Activated CD4-positive, alpha-beta T cell treated with anti-CD3 and anti-CD28 coated beads for 36 hours (primary cell): ENCODE measurements at regions of chr15 and their contacts with region 1.

Region 1: DNA sequence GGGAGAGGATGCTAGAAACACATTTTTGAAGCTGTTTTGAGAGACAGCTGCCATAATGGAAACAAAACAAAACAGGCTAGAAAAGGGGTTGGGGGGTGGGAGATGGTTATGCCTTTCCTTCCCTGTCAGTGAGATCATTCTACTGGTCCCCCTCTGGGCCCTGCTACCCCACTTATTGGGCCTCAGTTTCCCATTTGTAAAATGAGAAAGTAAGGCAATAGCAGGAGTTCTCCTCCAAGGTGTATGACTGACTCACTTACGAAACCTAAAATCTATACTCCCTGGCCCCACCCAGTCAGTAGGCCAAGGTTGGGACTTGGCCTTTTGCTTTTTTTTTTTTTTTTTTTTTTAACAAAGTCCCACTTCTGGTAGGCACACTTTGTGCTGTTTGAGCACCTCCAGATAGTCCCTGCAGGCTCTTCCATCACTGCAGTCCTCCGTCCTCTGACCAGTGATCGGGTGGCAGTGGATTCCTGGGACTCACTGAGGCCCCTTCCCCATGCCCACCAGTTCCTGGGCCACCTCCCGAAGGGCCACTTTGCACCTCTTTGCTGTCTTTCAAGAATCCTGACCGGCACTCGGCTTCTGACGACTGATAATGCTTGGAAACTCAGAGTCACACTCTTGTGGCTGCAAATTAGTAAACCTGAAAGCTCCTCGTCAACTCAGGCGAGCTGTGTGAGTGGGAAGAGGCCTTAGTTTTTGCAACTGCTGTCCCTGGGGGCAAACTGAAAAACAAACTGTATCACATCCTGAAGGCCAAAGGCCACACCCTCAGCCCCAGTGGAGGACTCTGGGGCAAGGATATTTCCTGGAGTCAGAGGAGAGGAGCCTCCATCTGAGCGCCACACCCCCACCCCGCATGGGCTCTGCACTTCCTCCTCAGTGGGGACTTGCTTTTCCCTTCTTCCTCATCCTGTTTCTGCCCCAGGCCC is 6.7 kb upstream of the PSTPIP1 start:
- DNase-seq: peak; percentile 89
- ATAC-seq: peak; percentile 90
- H3K4me3 Mint-ChIP-seq: peak overlapping the region; percentile 56
- H3K27ac Mint-ChIP-seq: peak overlapping the region; percentile 98
- H3K4me1 Mint-ChIP-seq: peaks cover 48% of the 10 kb centered on the region
- H3K27me3 Mint-ChIP-seq: no peaks in the 10 kb centered on the region

Region 2: DNA sequence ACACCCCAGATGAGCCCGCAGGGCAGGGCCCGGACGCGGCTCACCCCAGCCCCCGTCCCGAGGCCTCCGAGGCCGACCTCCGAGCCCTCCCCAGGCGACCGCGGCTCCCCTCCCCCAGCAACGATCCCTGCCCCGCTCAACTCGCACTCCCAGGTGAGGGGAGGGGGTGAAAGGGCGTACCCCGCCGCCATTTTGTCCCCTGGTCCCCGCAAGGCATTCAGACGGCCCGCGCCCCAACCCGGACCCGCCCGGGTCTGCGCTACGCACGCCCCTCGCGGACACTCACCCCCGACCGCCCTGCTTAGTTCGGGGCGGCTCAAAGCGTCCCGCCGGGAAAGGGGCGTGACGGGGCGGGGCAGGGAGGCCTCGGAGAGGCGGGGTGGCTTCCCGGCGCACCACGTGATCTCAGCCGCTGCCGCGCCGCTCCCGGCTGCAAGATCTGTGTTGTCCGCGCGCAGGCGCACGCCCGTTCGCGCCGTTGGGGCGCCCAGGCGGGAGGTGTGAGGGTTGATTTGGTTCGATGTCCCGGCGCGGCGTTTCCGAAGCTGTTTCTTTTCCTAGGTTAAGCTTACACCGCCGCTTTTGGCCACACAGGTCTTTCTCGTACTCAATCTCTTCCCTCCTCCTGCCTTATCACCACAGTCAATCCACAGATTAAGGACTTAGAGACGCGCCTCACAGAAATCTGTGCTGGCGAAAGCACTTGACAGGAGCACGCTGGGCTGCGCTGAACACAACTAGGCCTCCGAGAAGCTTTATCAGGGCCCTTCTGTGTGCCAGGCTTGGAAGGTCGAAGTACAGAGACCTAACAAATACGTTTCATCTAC is 83.0 kb before region 1 on chr15 and contains the start of gene SCAPER:
- CTCF ChIA-PET with region 1: no interaction called
- POLR2A ChIA-PET with region 1: interaction called, 3 read pairs
- intact Hi-C with region 1: loop called in 1 of 2 experiments (anchors 1 kb)
- DNase-seq: peak; percentile 96
- ATAC-seq: peak; percentile 92
- H3K4me3 Mint-ChIP-seq: peak within 1 kb of the TSS; percentile 87
- H3K27ac Mint-ChIP-seq: peak within 1 kb of the TSS; percentile 92
- H3K4me1 Mint-ChIP-seq: peaks cover 34% of the 10 kb centered on the region
- H3K27me3 Mint-ChIP-seq: no peaks in the 10 kb centered on the region
- total RNA-seq, gene SCAPER: 25.9 to 35.2 TPM

Region 3: DNA sequence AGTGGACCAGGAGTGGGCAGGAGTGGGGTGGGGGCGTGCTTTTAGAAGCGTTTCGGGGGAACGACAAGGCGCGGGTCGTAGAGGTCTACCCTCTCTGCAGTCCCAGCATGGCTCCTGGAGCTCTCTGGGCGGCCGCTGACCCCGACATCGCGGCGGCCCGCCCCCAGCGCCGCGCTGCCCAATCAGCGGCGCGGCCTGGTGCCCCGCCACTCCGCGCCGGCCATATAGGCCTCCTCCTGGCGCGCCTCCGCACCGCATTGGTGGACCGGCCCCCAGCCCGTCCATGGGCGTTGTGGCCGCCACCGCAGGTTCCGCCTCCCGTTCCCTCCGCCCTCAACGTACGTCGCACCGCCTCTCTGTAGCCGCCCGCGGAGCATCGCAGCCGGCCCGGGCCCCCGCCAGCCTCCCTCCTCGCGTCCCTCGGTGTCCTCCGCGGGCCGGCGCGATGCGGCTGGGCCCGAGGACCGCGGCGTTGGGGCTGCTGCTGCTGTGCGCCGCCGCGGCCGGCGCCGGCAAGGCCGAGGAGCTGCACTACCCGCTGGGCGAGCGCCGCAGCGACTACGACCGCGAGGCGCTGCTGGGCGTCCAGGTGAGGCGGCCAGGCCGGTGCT is 56.7 kb before region 1 on chr15 and contains the start of gene RCN2:
- CTCF ChIA-PET with region 1: interaction called, 3 read pairs
- POLR2A ChIA-PET with region 1: no interaction called
- intact Hi-C with region 1: loop called in 1 of 2 experiments (anchors 1 kb)
- DNase-seq: peak; percentile 96
- ATAC-seq: peak; percentile 99
- H3K4me3 Mint-ChIP-seq: peak within 1 kb of the TSS; percentile 81
- H3K27ac Mint-ChIP-seq: peak within 1 kb of the TSS; percentile 85
- H3K4me1 Mint-ChIP-seq: peaks cover 31% of the 10 kb centered on the region
- H3K27me3 Mint-ChIP-seq: no peaks in the 10 kb centered on the region
- total RNA-seq, gene RCN2: 16.6 to 18.9 TPM

Region 4: GRCh38 chr15:77002954-77003912 is 15.0 kb after region 1 on chr15:
- CTCF ChIA-PET with region 1: interaction called, 3 read pairs
- POLR2A ChIA-PET with region 1: interaction called, 11 read pairs
- intact Hi-C with region 1: loop called (anchors 1 kb)
- DNase-seq: peak; percentile 88
- ATAC-seq: peak; percentile 86
- H3K4me3 Mint-ChIP-seq: peak overlapping the region; percentile 67
- H3K27ac Mint-ChIP-seq: peak overlapping the region; percentile 94
- H3K4me1 Mint-ChIP-seq: peaks cover 84% of the 10 kb centered on the region
- H3K27me3 Mint-ChIP-seq: no peaks in the 10 kb centered on the region

Region 5: GRCh38 chr15:77013776-77014131 is 25.6 kb after region 1 on chr15:
- CTCF ChIA-PET with region 1: interaction called, 4 read pairs
- POLR2A ChIA-PET with region 1: interaction called, 4 read pairs
- intact Hi-C with region 1: loop called in 1 of 2 experiments (anchors 1 kb)
- DNase-seq: peak; percentile 95
- ATAC-seq: peak; percentile 89
- H3K4me3 Mint-ChIP-seq: peak overlapping the region; percentile 54
- H3K27ac Mint-ChIP-seq: peak overlapping the region; percentile 90
- H3K4me1 Mint-ChIP-seq: peaks cover 92% of the 10 kb centered on the region
- H3K27me3 Mint-ChIP-seq: no peaks in the 10 kb centered on the region

Region 6: GRCh38 chr15:77024271-77025082 is 36.3 kb after region 1 on chr15:
- CTCF ChIA-PET with region 1: interaction called, 11 read pairs
- POLR2A ChIA-PET with region 1: interaction called, 3 read pairs
- intact Hi-C with region 1: loop called (anchors 1 to 5 kb)
- DNase-seq: peak; percentile 82
- ATAC-seq: no peak
- H3K4me3 Mint-ChIP-seq: no peak overlapping the region
- H3K27ac Mint-ChIP-seq: peak overlapping the region; percentile 76
- H3K4me1 Mint-ChIP-seq: peaks cover 48% of the 10 kb centered on the region
- H3K27me3 Mint-ChIP-seq: no peaks in the 10 kb centered on the region

Region 7: GRCh38 chr15:77070495-77071304 is 82.5 kb after region 1 on chr15 and contains the start of gene TSPAN3:
- CTCF ChIA-PET with region 1: interaction called, 3 read pairs
- POLR2A ChIA-PET with region 1: interaction called, 6 read pairs
- intact Hi-C with region 1: loop called in 1 of 2 experiments (anchors 1 kb)
- DNase-seq: peak; percentile 95
- ATAC-seq: peak; percentile 99
- H3K4me3 Mint-ChIP-seq: peak within 1 kb of the TSS; percentile 75
- H3K27ac Mint-ChIP-seq: peak within 1 kb of the TSS; percentile 65
- H3K4me1 Mint-ChIP-seq: peaks cover 29% of the 10 kb centered on the region
- H3K27me3 Mint-ChIP-seq: no peaks in the 10 kb centered on the region
- total RNA-seq, gene TSPAN3: 26.2 to 28.4 TPM